Left lung (tissue), 14 donors: ENCODE measurements at regions of chr1 and their contacts with region 1.

Region 1: DNA sequence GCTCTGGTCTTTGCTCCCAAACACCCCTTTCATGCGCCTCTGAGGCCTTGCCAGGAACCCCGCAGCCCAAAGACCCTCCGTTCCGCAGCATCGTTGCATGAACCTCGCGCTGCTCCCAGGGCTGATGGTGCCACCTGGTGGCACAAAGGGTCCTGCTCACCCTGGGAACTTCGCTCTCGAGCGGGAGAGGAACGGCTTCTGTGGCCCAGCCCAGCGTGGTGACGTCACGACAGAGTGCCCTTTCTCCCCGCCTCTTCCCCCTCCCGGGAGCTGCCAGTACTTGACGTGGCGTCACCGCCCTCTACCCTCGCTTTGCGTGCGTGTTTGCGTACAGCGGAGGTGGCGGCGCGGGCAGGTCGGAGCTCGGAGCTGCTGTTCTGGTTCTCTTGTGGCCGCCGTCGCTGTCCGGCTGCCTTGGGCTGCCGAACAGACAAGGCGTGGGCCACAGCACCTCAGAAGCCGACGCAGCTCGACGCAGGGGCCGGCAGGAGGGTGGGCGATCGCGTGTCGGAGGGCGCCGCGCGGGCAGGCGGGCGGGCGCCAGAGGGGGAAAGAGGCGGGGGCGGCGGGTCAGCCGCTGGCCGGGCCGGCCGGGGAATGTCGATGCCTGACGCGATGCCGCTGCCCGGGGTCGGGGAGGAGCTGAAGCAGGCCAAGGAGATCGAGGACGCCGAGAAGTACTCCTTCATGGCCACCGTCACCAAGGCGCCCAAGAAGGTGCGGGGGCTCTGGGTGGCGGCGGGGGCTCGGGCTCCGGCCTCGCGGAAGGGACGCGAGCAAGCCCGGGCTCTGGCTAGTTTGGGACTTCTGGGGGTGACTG is at the start of gene AHCYL1:
- DNase-seq: peak; percentile 99 to 100 (median 100)
- ATAC-seq: peak; percentile 96
- H3K4me3 ChIP-seq: peak within 1 kb of the TSS; percentile 45 to 68
- H3K27ac ChIP-seq: peak within 1 kb of the TSS; percentile 93 to 94
- H3K4me1 ChIP-seq: peaks cover 16 to 55% of the 10 kb centered on the region in 2 donors
- H3K27me3 ChIP-seq: no peaks in the 10 kb centered on the region
- CTCF ChIP-seq: peak; percentile 93 to 100
- polyA plus RNA-seq, gene AHCYL1: 73.3 to 92.6 (median 83.9) TPM

Region 2: GRCh38 chr1:109548321-109549267 is 436.1 kb before region 1 on chr1 and contains the start of gene GNAI3:
- intact Hi-C with region 1: loop called in 1 of 2 experiments (anchors 10 kb)
- DNase-seq: peak; percentile 96 to 99 (median 97)
- ATAC-seq: peak; percentile 98
- H3K4me3 ChIP-seq: peak within 1 kb of the TSS; percentile 71 to 83
- H3K27ac ChIP-seq: peak within 1 kb of the TSS; percentile 93 to 98
- H3K4me1 ChIP-seq: peaks cover 23 to 61% of the 10 kb centered on the region in 2 donors
- H3K27me3 ChIP-seq: no peaks in the 10 kb centered on the region
- CTCF ChIP-seq: no peak
- polyA plus RNA-seq, gene GNAI3: 9.8 to 11.5 (median 11.1) TPM

Region 3: GRCh38 chr1:109643385-109644230 is 341.1 kb before region 1 on chr1:
- intact Hi-C with region 1: loop called in 1 of 2 experiments (anchors 5 kb)
- DNase-seq: peak; percentile 58 to 97 (median 80)
- ATAC-seq: peak; percentile 94
- H3K4me3 ChIP-seq: no peak overlapping the region
- H3K27ac ChIP-seq: no peak overlapping the region
- H3K4me1 ChIP-seq: peaks cover 0 to 11% of the 10 kb centered on the region in 2 donors
- H3K27me3 ChIP-seq: no peaks in the 10 kb centered on the region
- CTCF ChIP-seq: peak; percentile 80 to 92

Region 4: GRCh38 chr1:109773146-109773899 is 211.3 kb before region 1 on chr1:
- intact Hi-C with region 1: loop called (anchors 2 to 10 kb)
- DNase-seq: peak; percentile 65 to 90 (median 86)
- ATAC-seq: peak; percentile 93
- H3K4me3 ChIP-seq: no peak overlapping the region
- H3K27ac ChIP-seq: no peak overlapping the region
- H3K4me1 ChIP-seq: peaks cover 0 to 14% of the 10 kb centered on the region in 2 donors
- H3K27me3 ChIP-seq: no peaks in the 10 kb centered on the region
- CTCF ChIP-seq: peak; percentile 65 to 84

Region 5: DNA sequence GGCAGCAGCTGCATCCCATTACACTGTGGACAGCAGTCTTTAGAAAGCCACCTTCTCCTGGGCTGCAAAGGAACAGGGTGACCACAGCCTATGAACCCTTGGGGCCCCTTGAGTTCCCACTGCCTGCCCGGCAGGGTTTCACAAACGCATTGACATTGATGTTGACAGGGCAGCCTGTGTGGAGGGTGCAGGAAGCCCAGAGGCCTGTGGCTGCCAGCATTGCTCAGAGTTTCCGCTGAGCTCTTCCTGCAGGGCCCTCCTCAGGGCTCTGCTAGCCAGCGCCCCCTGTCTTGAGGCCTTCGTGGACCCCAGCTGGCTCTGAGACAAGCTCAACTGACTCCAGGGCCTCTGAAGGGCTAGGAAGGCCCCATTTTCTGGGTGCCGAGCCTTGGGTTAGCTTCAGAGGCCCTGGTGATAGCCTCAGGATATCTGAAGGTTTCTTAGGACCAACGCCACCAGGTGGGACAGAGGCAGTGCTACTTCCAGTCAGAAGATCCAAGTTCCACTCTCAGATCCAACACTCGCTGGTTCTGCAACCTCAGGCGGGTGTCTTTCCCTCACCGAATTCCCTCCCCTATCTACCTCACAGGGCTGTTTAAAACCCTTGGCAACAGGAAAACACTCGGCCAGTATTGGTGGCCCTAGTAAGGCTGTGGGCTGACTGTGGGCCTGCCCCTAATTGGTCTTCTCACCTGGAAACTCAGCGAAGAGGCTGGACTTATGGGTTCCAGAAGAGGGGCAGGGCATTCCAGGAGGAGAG is 193.8 kb before region 1 on chr1:
- intact Hi-C with region 1: loop called in 1 of 2 experiments (anchors 5 kb)
- DNase-seq: peak in 3 of 4 donors; percentile 54 to 88 (median 77)
- ATAC-seq: peak; percentile 46
- H3K4me3 ChIP-seq: no peak overlapping the region
- H3K27ac ChIP-seq: peak overlapping the region; percentile 30 to 81
- H3K4me1 ChIP-seq: peaks cover 28 to 79% of the 10 kb centered on the region in 2 donors
- H3K27me3 ChIP-seq: no peaks in the 10 kb centered on the region
- CTCF ChIP-seq: peak; percentile 23 to 45

Region 6: DNA sequence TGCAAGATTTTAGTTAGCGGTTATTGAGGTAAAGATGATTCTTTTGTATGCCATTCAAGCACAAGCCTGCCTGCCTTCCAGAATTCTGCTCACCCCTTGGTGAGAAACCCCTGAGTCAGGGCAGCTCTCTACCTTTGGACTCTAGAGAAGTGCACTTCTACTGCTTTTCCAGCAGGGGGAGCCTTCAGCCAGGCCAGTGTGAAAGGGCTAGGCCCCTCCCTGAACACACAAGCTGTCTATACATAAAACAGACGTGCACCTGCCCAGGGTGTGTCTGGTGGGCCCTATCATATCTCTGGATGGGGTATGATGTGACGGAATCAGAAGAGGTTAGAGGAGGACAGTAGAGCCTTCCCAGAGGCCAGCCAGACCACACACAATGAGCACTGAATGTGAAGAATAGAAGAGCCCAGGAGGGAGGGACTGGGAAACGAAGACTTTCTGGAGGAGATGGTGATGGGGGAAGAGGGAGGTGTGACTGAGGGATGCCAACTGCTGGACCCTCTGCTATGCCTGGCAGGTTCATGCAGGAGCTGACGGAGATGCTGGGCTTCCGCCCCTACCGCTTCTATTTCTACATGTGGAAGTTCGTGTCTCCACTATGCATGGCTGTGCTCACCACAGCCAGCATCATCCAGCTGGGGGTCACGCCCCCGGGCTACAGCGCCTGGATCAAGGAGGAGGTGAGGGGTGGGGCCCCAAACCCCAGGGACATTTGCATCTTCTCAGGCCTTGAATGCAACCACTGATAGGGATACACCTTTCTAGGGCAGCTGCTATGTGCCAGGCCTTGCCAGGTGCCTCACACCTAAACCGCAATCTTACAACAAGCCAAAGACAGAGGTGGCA is 212.5 kb after region 1 on chr1:
- intact Hi-C with region 1: no loop called
- DNase-seq: peak in 1 of 4 donors; percentile 16
- ATAC-seq: peak; percentile 87
- H3K4me3 ChIP-seq: no peak overlapping the region
- H3K27ac ChIP-seq: no peak overlapping the region
- H3K4me1 ChIP-seq: no peaks in the 10 kb centered on the region
- H3K27me3 ChIP-seq: no peaks in the 10 kb centered on the region
- CTCF ChIP-seq: peak; percentile 91

Region 7: GRCh38 chr1:110229348-110230001 is 244.8 kb after region 1 on chr1:
- intact Hi-C with region 1: no loop called
- DNase-seq: no peak
- ATAC-seq: no peak
- H3K4me3 ChIP-seq: no peak overlapping the region
- H3K27ac ChIP-seq: no peak overlapping the region
- H3K4me1 ChIP-seq: no peaks in the 10 kb centered on the region
- H3K27me3 ChIP-seq: no peaks in the 10 kb centered on the region
- CTCF ChIP-seq: no peak

Region 8: DNA sequence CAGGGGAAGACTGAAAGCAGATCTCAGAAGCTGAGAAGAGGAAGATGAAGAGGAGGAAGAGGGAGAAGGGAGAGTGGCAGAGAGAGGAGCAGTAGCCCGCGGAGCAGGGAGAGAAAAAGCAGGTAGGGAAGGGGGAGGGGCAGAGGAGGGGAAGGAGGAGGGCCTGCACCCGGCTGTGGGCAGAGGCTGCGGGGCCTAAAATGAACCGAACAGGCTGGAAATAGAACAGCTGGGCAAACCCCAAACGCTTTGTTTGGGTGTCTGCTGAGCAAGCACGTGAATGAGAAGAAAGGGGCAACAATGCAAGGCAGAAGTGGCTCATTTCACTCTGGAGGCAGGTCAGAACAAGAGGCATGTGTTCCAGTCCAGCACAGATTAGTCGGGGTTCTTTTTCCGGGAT is 258.9 kb after region 1 on chr1:
- intact Hi-C with region 1: no loop called
- DNase-seq: peak in 1 of 4 donors; percentile 7
- ATAC-seq: no peak
- H3K4me3 ChIP-seq: no peak overlapping the region
- H3K27ac ChIP-seq: no peak overlapping the region
- H3K4me1 ChIP-seq: peaks cover 0 to 20% of the 10 kb centered on the region in 2 donors
- H3K27me3 ChIP-seq: no peaks in the 10 kb centered on the region
- CTCF ChIP-seq: no peak